ENCODE measurements at regions of chr10 and their contacts with region 1.

Region 1: DNA sequence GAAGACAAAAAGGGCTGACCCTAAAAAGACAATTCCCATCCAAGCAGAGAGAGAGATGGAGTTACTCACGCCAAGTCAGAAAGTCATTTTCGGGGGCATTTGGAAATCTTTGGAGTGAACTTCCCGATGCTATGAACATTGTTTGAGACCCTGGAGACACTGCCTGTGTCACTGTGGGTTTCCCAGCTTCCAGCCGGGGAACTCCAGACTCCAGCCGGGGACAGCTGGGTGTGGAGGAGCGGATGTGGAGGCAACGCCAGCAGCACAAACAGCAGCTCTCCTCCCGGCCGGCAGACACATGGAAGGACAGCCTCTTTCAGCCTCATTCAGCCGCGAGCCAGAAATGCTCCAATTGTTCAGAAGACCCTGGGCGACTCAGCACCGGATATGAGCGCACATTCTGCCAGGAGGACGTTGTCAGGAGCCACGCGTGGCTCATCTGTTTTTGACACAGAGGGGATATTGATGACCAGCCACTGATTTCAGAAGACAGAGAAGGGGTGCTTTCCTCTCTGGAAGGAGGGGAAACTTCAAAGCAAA is 97.6 kb downstream of the PRPF18 start:
- DNase-seq: peak; percentile 82 to 91
- ATAC-seq: peak; percentile 67 to 89 (median 78)
- H3K4me3 ChIP-seq: peak overlapping the region in 2 of 10 donors; percentile 1 to 9
- H3K27ac ChIP-seq: peak overlapping the region; percentile 59 to 95 (median 86)
- H3K4me1 ChIP-seq: peaks cover 8 to 65% (median 51%) of the 10 kb centered on the region in 9 donors
- H3K27me3 ChIP-seq: no peaks in the 10 kb centered on the region
- CTCF ChIP-seq: no peak

Region 2: GRCh38 chr10:13707156-13707881 is 23.0 kb after region 1 on chr10:
- intact Hi-C with region 1: loop called in 3 of 10 experiments (anchors 1 to 5 kb)
- DNase-seq: peak; percentile 80 to 94
- ATAC-seq: peak; percentile 86 to 93 (median 90)
- H3K4me3 ChIP-seq: peak overlapping the region; percentile 7 to 70 (median 63)
- H3K27ac ChIP-seq: peak overlapping the region; percentile 44 to 91 (median 84)
- H3K4me1 ChIP-seq: peaks cover 11 to 90% (median 76%) of the 10 kb centered on the region in 9 donors
- H3K27me3 ChIP-seq: no peaks in the 10 kb centered on the region
- CTCF ChIP-seq: peak in 1 of 9 donors; percentile 17

Region 3: DNA sequence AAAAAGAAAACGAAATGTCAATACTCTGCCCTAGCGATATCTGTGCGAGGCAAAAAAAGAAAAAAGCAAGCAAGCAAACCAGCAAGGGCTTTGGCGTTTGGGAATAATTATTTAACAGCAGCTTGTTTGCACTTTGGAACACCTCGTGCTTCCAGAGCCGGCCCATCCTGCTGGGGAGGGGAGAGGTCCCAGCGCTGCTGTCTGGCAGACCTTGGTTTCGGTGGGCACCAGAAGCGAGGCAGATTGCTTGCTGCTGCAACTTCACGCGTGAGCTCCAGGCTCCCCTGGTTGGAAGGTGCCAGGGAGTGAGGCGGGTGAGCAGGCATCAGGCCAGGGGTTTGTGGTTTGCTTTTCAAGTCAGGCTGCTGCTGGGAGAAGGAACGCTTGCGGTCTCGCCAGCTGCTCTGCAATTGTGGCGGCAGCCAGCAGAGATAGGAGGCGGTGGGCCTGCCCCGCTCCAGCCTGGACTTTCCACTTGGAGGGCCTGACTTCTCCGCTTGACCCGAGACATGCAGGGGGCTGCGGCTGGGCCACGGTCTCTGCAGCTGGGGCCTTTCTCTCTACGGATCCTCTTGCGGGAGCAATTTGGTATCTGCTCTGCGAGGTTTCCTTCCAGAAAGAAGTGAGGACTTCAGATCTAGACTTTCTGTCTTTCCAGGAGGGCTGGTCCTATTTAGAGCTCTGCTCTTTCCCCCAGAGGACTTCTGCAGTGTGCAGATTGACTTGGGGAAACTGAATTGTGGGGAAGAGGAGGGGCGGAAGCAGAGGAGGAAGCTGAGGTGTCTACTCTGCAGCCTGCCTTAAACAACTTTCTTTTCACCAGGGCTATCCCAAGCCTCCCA is 33.8 kb after region 1 on chr10:
- intact Hi-C with region 1: loop called in 2 of 10 experiments (anchors 5 kb)
- DNase-seq: peak; percentile 76 to 80
- ATAC-seq: peak; percentile 73 to 86 (median 80)
- H3K4me3 ChIP-seq: peak overlapping the region in 9 of 10 donors; percentile 24 to 45 (median 40)
- H3K27ac ChIP-seq: peak overlapping the region; percentile 72 to 85 (median 76)
- H3K4me1 ChIP-seq: peaks cover 0 to 43% (median 31%) of the 10 kb centered on the region in 9 donors
- H3K27me3 ChIP-seq: no peaks in the 10 kb centered on the region
- CTCF ChIP-seq: no peak

Region 4: DNA sequence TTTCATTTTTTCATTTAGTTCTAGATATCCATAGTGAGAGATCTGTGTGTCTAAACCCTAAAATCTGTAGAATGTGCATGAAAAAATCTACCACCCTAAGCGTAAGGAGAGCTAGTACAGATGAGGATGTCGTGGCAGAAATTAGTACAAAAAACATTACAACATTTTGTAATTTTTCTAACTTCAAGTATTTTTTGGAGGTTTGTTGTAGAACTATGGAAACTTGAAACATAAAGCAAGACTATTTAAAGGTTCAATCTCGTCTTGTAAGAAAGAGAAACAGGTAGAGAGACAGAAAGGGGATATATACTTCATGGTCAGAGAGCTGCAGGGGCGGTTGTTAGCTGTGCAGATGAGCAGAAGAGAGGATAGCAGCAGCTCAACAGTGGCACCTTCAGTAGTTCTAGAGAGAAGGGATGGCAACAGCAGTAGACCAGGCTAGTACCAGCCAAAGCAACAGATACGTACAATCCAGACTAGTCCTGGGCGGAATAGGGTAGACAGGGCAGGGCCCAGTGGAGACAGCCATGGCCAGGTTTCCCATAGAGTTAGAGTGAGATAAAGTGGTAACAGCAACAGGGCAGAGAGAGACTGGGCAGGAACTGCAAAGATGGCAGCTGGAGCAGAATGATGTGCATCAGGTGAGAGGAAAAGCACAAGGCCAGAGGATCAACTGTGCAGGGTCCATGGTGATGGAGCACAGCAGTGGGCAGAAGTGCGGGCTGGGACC is 501.2 kb after region 1 on chr10:
- intact Hi-C with region 1: no loop called
- DNase-seq: no peak
- ATAC-seq: no peak
- H3K4me3 ChIP-seq: no peak overlapping the region
- H3K27ac ChIP-seq: no peak overlapping the region
- H3K4me1 ChIP-seq: peaks cover 0 to 4% (median 0%) of the 10 kb centered on the region in 9 donors
- H3K27me3 ChIP-seq: peaks cover 0 to 35% (median 24%) of the 10 kb centered on the region in 7 donors
- CTCF ChIP-seq: no peak

Measured in heart right ventricle (tissue), 16 donors.